ENCODE measurements at regions of chr5 and their contacts with region 1.

Region 1: DNA sequence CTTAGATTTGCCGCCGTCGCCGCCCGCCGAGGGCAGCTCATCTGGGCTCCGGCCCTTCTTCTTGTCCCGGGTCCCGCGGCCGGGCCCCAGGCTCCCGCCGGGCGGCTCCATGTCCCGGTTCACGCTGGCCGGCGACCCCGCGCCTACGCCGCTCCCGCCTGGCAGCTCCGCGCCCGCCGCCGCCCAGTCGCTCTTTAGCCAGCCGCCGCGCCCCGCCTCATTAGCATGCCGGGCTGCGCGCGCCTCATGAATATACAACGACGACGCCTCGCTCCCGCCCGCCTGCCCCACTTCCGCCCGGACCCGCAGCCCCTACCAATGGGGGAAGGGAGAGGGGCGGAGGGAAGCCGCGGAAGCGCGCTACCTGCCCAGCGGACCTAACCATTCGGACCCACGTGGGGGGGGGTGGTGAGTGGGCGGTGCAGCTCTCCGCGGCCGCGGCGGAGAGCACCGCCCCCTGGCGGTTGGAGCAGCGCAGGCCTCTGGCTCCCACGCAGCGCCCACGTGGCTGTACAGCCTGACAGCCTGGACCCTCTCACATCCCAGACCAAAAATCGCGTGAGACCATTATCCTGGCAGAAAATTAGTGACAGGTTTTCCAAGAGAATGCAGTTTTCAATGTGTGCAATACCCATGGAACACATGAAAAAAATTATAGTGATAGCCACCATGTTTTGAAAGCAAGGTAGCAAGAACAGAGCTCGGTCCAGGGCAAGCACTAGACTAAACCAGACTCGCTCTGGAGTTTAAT is at the start of gene DIAPH1:
- DNase-seq: peak; percentile 99
- ATAC-seq: peak; percentile 88
- H3K4me3 Mint-ChIP-seq: peak within 1 kb of the TSS; percentile 98
- H3K27ac Mint-ChIP-seq: peak within 1 kb of the TSS; percentile 98
- H3K4me1 Mint-ChIP-seq: peaks cover 64% of the 10 kb centered on the region
- H3K27me3 Mint-ChIP-seq: no peaks in the 10 kb centered on the region
- total RNA-seq, gene DIAPH1: 185 to 212 TPM

Region 2: DNA sequence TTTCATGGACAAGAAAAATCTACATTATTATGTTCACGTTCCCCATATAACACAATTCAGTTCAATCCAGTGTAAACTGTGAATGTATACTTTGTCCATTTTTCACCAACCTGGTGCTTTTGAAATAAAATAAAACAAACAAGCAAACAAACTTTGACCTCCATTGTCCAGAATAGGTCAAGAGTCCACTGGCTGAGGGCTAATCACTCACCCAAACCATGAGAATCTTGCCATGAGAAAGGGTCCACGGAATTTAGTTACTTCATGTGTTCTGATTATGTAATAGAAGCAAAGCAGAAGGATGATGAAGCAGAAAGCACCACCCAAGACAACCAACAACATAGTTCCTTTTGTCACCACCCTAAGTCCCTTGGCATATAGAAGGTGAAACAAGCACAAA is 28.9 kb before region 1 on chr5:
- CTCF ChIA-PET with region 1: interaction called, 261 read pairs
- POLR2A ChIA-PET with region 1: interaction called, 48 read pairs
- intact Hi-C with region 1: loop called (anchors 1 kb)
- DNase-seq: no peak
- ATAC-seq: no peak
- H3K4me3 Mint-ChIP-seq: no peak overlapping the region
- H3K27ac Mint-ChIP-seq: peak overlapping the region; percentile 2
- H3K4me1 Mint-ChIP-seq: peaks cover 37% of the 10 kb centered on the region
- H3K27me3 Mint-ChIP-seq: no peaks in the 10 kb centered on the region

Region 3: DNA sequence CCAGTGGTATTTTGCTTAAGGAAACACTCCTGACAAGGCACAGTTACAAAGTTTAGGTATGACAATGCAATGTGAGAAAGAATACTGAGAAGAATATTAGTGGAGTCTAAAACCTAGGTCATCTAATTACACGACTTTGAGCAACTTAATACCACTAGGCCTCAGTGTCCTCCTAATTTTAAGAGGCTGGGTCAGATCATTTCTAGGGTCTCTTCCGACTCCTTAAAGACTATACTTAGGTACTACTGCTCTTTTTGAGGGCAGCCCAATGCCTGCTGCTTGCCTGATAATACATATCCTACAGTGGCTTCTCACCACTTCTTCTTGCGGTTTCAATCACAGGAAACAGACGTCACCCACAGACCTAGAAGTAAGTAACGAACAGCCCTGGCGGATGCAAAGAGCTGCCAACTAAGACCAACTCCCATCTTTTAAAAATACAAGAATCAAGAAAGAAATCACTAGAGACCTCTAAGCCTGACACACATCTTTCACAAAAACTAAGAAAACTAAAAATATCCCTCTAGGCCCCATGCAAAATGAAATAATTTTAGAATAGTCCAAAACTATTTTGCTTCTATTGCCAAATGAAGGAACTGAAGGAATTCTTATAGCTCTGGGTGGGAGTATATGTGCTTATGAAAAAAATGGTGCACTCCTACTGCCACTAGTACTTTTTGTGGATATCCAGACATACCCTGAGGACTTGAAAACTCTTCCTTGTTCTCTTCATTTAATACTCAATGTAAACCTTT is 13.3 kb before region 1 on chr5:
- CTCF ChIA-PET with region 1: interaction called, 25 read pairs
- POLR2A ChIA-PET with region 1: interaction called, 8 read pairs
- intact Hi-C with region 1: loop called (anchors 1 kb)
- DNase-seq: peak; percentile 79
- ATAC-seq: peak; percentile 90
- H3K4me3 Mint-ChIP-seq: peak overlapping the region; percentile 55
- H3K27ac Mint-ChIP-seq: peak overlapping the region; percentile 91
- H3K4me1 Mint-ChIP-seq: peaks cover 86% of the 10 kb centered on the region
- H3K27me3 Mint-ChIP-seq: no peaks in the 10 kb centered on the region

Region 4: GRCh38 chr5:141650851-141651727 is 32.1 kb after region 1 on chr5 and contains the start of gene FCHSD1:
- CTCF ChIA-PET with region 1: no interaction called
- POLR2A ChIA-PET with region 1: interaction called, 3 read pairs
- intact Hi-C with region 1: loop called in 1 of 2 experiments (anchors 1 kb)
- DNase-seq: peak; percentile 91
- ATAC-seq: peak; percentile 95
- H3K4me3 Mint-ChIP-seq: peak within 1 kb of the TSS; percentile 84
- H3K27ac Mint-ChIP-seq: peak within 1 kb of the TSS; percentile 94
- H3K4me1 Mint-ChIP-seq: peaks cover 20% of the 10 kb centered on the region
- H3K27me3 Mint-ChIP-seq: no peaks in the 10 kb centered on the region
- total RNA-seq, gene FCHSD1: 28.2 to 32.9 TPM